ENCODE measurements at regions of chr9 and their contacts with region 1.

Region 1: GRCh38 chr9:71604197-71605063 is 163.9 kb downstream of the CEMIP2 start:
- DNase-seq: peak; percentile 10
- H3K4me3 ChIP-seq: no peak overlapping the region
- CTCF ChIP-seq: peak; percentile 81

Region 2: DNA sequence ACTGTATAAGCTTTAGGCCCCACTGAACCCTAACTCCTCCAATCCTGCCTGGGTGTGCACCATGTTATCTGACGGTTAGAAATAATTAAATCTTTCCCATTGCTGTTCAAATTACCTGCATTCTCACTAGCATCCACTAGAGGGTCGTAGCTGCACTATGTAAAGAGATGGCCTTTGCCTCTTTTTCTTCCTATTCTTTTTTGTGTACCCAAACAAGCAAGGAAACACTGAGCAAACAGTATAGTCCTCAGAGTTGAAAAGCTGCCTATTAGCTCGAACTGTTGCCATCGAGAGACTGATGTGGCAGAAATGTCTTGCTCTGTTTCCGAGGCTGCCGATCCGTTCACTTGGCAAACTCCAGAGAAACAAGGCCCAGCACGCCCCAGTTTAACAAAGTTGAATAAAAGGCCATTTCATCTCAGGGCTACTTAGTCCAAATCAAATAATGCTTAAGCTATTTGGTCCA is 319.2 kb before region 1 on chr9:
- CTCF ChIA-PET with region 1: interaction called, 15 read pairs
- POLR2A ChIA-PET with region 1: no interaction called
- DNase-seq: peak; percentile 29
- H3K4me3 ChIP-seq: no peak overlapping the region
- CTCF ChIP-seq: peak; percentile 73

Region 3: GRCh38 chr9:71628247-71628646 is 23.8 kb after region 1 on chr9:
- CTCF ChIA-PET with region 1: interaction called, 11 read pairs
- POLR2A ChIA-PET with region 1: no interaction called
- DNase-seq: no peak
- H3K4me3 ChIP-seq: no peak overlapping the region
- CTCF ChIP-seq: peak; percentile 9

Region 4: GRCh38 chr9:71683598-71684235 is 79.3 kb after region 1 on chr9:
- CTCF ChIA-PET with region 1: interaction called, 24 read pairs
- POLR2A ChIA-PET with region 1: no interaction called
- DNase-seq: no peak
- H3K4me3 ChIP-seq: no peak overlapping the region
- CTCF ChIP-seq: peak; percentile 64

Region 5: DNA sequence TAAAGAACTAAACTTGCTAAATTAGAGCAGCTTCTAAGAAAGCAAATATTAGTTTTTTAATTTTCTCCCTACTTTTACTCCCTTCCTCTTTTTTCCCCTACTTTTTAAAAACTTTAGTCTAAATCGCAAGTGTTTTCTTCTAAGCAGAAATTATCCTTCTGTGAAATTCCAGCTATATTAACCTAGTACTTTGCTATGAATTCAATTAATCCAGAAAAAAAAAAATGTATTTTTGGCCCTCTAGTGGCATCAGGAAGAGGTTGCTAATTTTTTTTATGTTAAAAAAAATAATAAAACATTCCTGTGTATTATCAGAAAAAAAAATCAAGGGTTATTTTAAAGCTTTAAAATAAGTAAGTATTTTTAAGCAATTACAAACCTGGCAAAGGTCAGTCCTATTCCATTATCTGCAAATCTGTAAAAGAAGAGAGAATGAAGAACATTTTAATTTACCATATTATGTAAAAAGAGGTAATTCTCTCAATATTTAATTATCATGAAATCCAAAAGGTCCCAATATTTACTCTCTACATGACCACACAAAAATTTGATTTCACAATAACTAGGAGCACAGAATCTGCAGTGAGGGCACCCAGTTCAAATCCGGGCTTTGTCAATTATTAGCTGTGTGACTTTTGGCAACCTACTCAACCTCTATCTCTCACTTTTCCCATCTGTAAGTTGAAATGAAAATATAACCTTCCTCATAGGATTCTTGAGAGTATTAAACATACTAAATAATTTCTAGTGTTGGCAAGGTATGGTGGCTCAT is 111.9 kb after region 1 on chr9:
- CTCF ChIA-PET with region 1: interaction called, 18 read pairs
- POLR2A ChIA-PET with region 1: no interaction called
- DNase-seq: no peak
- H3K4me3 ChIP-seq: no peak overlapping the region
- CTCF ChIP-seq: no peak

Region 6: GRCh38 chr9:71806901-71807307 is 202.5 kb after region 1 on chr9:
- CTCF ChIA-PET with region 1: interaction called, 15 read pairs
- POLR2A ChIA-PET with region 1: no interaction called
- DNase-seq: peak; percentile 29
- H3K4me3 ChIP-seq: no peak overlapping the region
- CTCF ChIP-seq: peak; percentile 91

Region 7: DNA sequence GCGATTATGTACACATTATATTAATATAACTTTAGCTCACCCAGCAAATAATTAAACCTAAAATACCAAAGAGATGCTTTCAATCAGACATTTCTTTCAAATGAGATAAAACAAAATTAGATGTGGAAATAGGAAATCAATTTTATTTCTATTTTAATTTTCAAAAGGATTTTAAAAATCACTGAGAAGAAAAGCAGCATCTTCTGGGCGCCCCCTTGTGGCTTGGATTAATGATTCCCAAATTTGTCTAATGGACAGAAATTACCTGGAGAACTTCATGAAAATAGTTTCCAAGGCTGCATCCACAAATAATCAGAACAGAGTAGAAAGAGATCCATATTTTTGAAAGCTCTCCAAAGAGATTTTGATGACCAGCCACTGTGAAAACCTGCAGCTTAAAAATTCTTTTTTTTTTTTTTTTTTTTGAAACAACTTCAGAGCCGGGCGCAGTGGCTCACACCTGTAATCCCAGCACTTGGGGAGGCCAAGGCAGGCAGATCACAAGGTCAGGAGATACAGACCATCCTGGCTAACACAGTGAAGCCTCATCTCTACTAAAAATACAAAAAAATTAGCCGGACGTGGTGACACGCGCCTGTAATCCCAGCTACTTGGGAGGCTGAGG is 214.8 kb after region 1 on chr9:
- CTCF ChIA-PET with region 1: interaction called, 22 read pairs
- POLR2A ChIA-PET with region 1: no interaction called
- DNase-seq: no peak
- H3K4me3 ChIP-seq: no peak overlapping the region
- CTCF ChIP-seq: peak; percentile 37

Measured in AG04449 (cell line).